Right ventricle myocardium superior (tissue), 1 donor: ENCODE measurements at regions of chr2 and their contacts with region 1.

Region 1: GRCh38 chr2:170815746-170816503 is 762 bp upstream of the GAD1 start:
- DNase-seq: peak; percentile 57
- ATAC-seq: peak; percentile 78

Region 2: GRCh38 chr2:170221317-170222288 is 594.3 kb before region 1 on chr2:
- intact Hi-C with region 1: loop called (anchors 10 kb)
- DNase-seq: no peak
- ATAC-seq: no peak

Region 3: DNA sequence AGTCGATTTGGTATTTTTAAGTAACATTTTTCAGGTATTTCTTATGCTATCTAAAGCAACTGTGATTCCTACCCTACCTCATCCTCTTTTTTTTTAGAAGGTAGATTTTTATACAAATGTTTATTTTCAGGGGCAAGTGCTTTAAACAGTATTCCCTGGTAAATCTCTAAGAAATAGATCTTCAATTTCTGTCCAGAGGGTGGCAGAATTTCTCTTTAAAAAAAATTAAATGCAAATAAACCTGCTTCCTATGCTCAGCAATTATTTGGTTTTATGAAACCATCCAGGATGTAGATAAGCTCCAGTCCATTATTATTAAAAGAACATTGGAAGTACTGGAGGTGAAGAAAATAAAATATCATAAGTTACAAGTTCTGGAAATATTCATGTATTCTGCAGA is 446.0 kb before region 1 on chr2:
- intact Hi-C with region 1: loop called (anchors 5 kb)
- DNase-seq: no peak
- ATAC-seq: no peak

Region 4: DNA sequence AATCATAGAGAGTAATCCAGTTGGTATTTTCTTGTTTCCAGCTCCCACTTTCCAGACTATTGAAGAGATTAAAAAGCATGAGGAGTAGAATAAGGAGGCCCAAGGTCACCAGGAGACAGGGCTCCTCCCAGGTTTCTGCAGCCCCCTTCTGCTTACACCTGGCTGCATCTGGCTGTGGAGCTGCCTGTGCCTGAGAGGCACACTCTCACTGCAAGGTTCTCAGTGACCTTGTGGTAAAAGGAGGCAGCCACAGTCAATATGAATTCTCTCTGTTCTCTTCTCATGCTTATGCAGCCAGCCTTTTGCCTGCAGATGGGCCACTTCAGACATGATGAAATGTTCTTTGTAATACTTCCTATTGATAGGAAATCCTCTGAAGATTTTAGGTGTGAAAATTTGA is 404.3 kb before region 1 on chr2:
- intact Hi-C with region 1: loop called (anchors 5 kb)
- DNase-seq: no peak
- ATAC-seq: no peak

Region 5: GRCh38 chr2:170486730-170487129 is 329.2 kb before region 1 on chr2:
- intact Hi-C with region 1: loop called (anchors 5 kb)
- DNase-seq: no peak
- ATAC-seq: no peak

Region 6: GRCh38 chr2:170895023-170895757 is 79.3 kb after region 1 on chr2:
- intact Hi-C with region 1: no loop called
- DNase-seq: no peak
- ATAC-seq: no peak